A549 (cell line): ENCODE measurements at regions of chr11 and their contacts with region 1.

Region 1: DNA sequence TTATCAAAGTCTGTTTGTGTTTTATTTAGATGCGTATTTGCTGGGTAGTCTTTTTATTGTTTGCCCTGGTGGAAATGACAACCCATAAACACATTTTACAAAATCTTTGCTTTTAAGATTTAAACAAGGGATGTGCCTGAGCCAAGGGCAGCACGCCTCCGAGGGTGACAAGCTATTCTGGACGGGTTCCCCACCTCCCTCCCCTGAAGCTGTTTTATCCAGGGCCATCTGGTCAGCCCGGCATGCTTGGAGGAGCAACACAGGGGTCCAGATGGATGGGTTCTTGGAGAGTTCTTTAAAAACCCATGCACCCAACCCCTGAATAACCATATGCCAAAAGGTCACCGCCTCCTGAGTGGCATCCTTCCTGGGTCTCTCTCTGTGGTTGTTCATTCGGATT is 408.9 kb downstream of the OPCML start:
- DNase-seq: no peak
- ATAC-seq: no peak
- H3K4me3 ChIP-seq: no peak overlapping the region
- H3K27ac ChIP-seq: no peak overlapping the region
- H3K4me1 ChIP-seq: no peaks in the 10 kb centered on the region
- CTCF ChIP-seq: no peak
- EP300 ChIP-seq: no peak
- POLR2A ChIP-seq: no peak
- RAD21 ChIP-seq: no peak

Region 2: GRCh38 chr11:132632641-132633124 is 490.7 kb before region 1 on chr11:
- CTCF ChIA-PET with region 1: no interaction called
- POLR2A ChIA-PET with region 1: interaction called, 10 read pairs
- DNase-seq: peak in 1 of 2 experiments; percentile 7
- ATAC-seq: no peak
- H3K4me3 ChIP-seq: no peak overlapping the region
- H3K27ac ChIP-seq: no peak overlapping the region
- H3K4me1 ChIP-seq: no peaks in the 10 kb centered on the region
- CTCF ChIP-seq: no peak
- EP300 ChIP-seq: no peak
- POLR2A ChIP-seq: no peak
- RAD21 ChIP-seq: no peak